Activated T-helper 2 cell treated with anti-CD3 and anti-CD28 coated beads, Interferon-gamma antibody, Interleukin-2, Interleukin-4, amounts not matched to agents 10 μg/mL and 5 μg/mL and 100 μg/mL, durations not matched to agents 14 hours and 24 hours and 36 hours (primary cell): ENCODE measurements at regions of chr11 and their contacts with region 1.

Region 1: DNA sequence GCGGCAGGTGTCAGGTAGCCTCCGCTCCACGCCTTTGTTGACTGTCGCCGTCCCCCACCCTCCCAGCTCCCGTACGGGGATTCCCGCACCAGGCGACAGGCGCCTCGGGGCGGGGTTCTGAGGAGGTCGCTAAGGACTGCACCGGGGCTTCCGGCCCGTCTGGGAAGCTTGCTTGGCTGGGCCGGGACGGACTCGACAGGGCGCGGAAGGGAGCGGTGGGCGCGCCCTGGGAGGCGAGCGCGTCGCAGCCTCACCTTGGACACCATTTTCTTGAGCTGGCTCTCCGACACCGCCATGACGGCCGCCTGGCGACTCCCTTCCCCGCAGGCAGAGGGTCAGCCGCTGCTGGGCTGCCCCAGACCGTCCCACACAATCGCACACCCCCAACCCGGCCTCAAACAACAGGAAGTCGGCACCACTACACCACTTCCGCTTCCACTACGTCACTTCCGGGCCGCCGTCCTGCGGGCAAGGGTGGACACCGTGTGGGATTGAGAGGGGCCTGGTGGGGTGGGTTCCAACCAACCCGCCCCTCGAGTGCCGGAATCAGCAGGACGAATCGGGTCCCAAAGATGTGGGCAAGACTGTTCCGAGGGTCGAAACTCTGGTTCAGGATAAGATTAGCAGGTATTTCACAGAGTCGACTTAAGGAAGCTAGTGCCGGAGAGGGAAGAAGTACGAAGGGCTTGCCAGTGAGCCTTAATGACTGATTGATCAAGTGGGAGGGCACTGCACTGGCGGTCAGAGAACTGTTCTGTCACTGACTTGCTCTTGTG is at the start of gene TSG101:
- DNase-seq: peak; percentile 90
- H3K4me3 Mint-ChIP-seq: peak within 1 kb of the TSS; percentile 97
- H3K27ac Mint-ChIP-seq: peak within 1 kb of the TSS; percentile 98
- H3K4me1 Mint-ChIP-seq: peaks cover 30% of the 10 kb centered on the region
- H3K27me3 Mint-ChIP-seq: no peaks in the 10 kb centered on the region
- total RNA-seq, gene TSG101: 49.5 and 53.3 TPM in 2 replicates

Region 2: DNA sequence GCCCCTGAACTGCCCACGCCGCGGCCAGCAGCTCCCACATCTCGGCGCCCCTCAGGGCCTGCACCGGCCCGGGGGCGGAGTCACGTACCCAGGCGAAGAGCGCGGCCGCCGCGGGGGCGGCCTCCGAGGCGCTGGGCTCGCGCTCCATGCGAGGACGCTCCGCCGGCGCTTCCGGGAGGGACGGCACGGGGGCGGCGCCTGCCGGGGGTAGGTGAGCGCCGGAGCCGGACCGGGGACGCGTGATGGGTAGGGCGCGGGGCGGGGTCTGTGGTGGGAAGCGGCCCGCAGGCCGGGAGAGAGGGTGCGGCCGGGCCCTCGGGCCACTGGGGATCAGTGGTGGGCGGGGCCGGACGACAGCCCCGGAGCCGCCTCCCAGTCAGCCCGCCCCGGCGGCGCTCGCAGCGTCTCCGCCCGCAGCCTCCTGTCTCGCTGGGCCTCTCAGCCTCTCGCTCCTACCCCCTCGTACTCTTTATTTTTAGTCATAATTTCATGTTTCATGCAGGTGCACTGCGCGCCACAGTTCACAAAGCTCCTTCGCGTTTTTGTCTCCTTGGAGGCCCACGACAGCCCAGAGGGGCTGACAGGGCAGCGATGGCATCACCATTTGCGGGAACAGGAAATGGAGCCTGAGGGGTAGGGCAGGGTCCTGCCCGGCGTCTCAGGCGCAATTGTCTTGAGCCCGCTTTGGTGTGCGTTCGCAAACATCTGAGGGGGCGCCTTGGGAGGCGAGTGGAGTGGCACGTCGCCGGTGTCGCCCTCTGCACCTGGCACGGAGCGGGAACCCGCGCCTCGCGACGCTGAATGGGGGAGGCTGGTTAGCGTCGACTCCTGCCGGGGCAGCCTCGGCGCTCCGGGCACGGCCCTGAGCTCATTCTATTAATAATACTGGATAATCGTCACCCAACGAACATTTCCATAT is 513.6 kb before region 1 on chr11 and contains the start of gene SERGEF:
- intact Hi-C with region 1: loop called (anchors 10 kb)
- DNase-seq: peak; percentile 93
- H3K4me3 Mint-ChIP-seq: peak within 1 kb of the TSS; percentile 99
- H3K27ac Mint-ChIP-seq: peak within 1 kb of the TSS; percentile 91
- H3K4me1 Mint-ChIP-seq: peaks cover 33% of the 10 kb centered on the region
- H3K27me3 Mint-ChIP-seq: no peaks in the 10 kb centered on the region
- total RNA-seq, gene SERGEF: 39.5 and 43.9 TPM in 2 replicates

Region 3: DNA sequence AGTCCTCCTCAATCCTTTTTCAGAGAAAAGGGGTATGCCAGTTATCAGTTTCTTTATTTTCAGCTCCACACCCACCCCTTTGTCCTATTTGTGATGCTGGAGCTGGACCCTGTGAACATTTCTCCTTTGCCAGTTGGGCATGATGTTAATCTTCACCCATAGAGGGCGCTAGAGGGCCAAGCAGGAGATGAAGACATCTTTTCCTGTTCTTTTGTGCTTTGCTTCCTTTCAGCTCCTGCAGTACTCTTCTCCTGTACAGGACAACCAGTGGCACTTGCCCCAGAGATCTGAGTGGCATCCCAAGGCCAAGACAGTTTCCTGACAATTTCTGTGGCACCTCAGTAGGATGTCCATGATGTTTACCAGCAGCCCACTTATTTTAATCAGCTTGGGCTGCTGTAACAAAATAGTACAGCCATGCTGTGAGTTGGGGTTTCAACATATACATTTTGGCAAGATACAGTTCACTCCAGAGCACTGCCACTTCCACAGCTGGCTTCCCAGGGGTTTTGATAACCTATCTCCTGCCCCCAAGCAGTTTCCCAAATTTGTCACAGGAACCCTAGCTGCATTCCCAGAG is 282.8 kb before region 1 on chr11:
- intact Hi-C with region 1: loop called (anchors 5 kb)
- DNase-seq: peak; percentile 63
- H3K4me3 Mint-ChIP-seq: no peak overlapping the region
- H3K27ac Mint-ChIP-seq: peak overlapping the region; percentile 54
- H3K4me1 Mint-ChIP-seq: peaks cover 25% of the 10 kb centered on the region
- H3K27me3 Mint-ChIP-seq: peaks cover 34% of the 10 kb centered on the region

Region 4: DNA sequence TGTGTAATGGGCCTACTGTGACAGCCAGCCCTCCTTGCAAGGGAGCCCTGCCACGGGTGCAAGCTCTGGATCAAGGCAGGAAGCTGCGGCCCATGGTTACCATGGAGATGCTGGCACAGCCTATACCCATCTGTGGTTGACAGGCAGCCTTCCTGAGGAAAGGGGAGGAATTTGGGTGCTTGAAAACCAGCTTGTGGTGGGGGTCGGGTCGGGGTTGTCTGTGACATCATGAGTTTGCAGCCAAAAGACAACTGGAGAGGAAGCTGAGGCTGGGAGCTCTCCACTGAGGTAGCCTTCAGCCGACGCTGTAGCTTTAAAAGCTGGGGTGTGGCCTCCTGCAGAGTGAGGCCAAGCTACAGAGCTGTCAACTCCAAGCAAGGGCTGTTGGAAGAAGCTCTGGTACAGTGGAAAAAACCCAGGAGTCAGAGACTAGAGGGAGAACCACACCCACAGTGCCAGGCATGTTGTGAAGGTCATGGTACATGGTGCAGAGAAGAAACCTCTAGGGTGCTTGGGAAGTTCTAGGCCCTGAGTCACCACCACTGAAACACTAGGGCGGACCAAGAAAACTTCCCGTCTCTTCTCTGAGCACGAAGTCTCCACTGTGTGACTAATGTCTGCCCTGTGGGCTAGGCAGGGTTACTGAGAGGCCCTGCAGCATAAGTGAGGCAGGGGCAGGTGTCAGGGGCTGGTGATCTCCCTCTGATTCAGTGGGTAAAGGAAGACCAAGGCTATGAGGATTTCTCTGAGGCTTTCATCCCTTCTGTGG is 143.1 kb before region 1 on chr11:
- intact Hi-C with region 1: loop called (anchors 1 kb)
- DNase-seq: peak; percentile 63
- H3K4me3 Mint-ChIP-seq: peak overlapping the region; percentile 75
- H3K27ac Mint-ChIP-seq: peak overlapping the region; percentile 100
- H3K4me1 Mint-ChIP-seq: peaks cover 35% of the 10 kb centered on the region
- H3K27me3 Mint-ChIP-seq: no peaks in the 10 kb centered on the region

Region 5: DNA sequence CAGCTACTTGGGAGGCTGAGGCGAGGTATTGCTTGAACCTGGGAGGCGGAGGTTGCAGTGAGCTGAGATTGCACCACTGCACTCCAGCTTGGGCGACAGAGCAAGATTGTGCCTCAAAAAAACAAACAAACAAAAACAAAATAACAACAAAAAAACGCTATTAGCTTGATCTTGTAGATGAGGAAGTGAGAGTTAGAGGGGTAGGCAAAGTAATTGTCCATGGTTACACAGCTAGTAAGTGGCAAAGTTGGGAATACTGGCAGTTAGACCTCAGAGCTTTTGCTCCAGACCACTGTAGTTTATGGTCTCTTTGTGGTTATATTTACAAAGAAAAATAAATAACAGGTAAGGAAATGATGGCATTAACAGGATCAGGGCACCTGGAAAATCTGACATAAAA is 99.5 kb before region 1 on chr11:
- intact Hi-C with region 1: no loop called
- DNase-seq: no peak
- H3K4me3 Mint-ChIP-seq: no peak overlapping the region
- H3K27ac Mint-ChIP-seq: no peak overlapping the region
- H3K4me1 Mint-ChIP-seq: peaks cover 3% of the 10 kb centered on the region
- H3K27me3 Mint-ChIP-seq: no peaks in the 10 kb centered on the region

Region 6: GRCh38 chr11:18588297-18589252 is 61.9 kb after region 1 on chr11 and contains the start of gene UEVLD:
- intact Hi-C with region 1: loop called (anchors 1 kb)
- DNase-seq: peak; percentile 62
- H3K4me3 Mint-ChIP-seq: no peak within 1 kb of the TSS
- H3K27ac Mint-ChIP-seq: no peak within 1 kb of the TSS
- H3K4me1 Mint-ChIP-seq: peaks cover 9% of the 10 kb centered on the region
- H3K27me3 Mint-ChIP-seq: no peaks in the 10 kb centered on the region
- total RNA-seq, gene UEVLD: 26.4 and 32.7 TPM in 2 replicates

Region 7: GRCh38 chr11:18634140-18635032 is 107.7 kb after region 1 on chr11 and contains the start of gene SPTY2D1:
- intact Hi-C with region 1: loop called (anchors 1 kb)
- DNase-seq: peak; percentile 98
- H3K4me3 Mint-ChIP-seq: peak within 1 kb of the TSS; percentile 97
- H3K27ac Mint-ChIP-seq: peak within 1 kb of the TSS; percentile 93
- H3K4me1 Mint-ChIP-seq: peaks cover 22% of the 10 kb centered on the region
- H3K27me3 Mint-ChIP-seq: peaks cover 3% of the 10 kb centered on the region
- total RNA-seq, gene SPTY2D1: 26.5 and 29.0 TPM in 2 replicates

Region 8: DNA sequence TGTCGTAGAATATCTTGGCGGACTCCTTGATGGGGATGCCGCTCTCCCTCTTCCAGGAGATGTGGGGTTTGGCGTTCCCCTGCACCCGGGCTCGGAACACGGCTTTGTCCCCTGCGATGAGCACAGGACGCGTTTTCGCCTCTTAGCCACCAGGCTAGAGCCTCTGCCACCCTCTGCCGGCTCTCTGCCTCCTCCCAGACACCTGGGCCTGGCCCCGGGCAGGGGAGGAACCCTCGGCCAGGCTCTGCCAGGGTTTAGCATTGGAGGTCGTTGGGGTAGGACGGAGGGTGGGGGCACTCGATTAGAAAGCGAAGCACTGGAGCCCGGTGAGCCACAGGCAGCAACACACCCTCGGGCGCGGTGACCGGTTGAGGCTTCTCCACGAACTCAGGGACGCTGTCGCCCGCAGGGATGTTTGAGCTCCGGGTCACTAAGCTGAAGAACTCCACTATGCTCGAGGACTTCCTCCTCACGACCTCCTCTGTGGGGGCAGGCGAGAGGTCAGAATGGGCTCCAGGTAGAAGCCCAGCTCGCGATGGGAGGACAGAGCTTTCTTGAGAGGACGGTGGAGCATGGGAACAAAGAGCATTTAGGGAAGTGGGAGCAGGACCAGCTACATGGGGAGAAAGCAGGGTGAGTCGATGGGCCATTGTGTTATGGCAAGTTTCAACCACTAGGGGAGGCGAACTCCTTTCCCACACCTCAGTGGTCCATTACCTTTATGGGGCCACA is 195.0 kb after region 1 on chr11:
- intact Hi-C with region 1: loop called (anchors 5 kb)
- DNase-seq: peak; percentile 32
- H3K4me3 Mint-ChIP-seq: peak overlapping the region; percentile 84
- H3K27ac Mint-ChIP-seq: no peak overlapping the region
- H3K4me1 Mint-ChIP-seq: peaks cover 7% of the 10 kb centered on the region
- H3K27me3 Mint-ChIP-seq: peaks cover 15% of the 10 kb centered on the region

Region 9: GRCh38 chr11:18836417-18836816 is 309.7 kb after region 1 on chr11:
- intact Hi-C with region 1: no loop called
- DNase-seq: no peak
- H3K4me3 Mint-ChIP-seq: no peak overlapping the region
- H3K27ac Mint-ChIP-seq: no peak overlapping the region
- H3K4me1 Mint-ChIP-seq: no peaks in the 10 kb centered on the region
- H3K27me3 Mint-ChIP-seq: peaks cover 7% of the 10 kb centered on the region

Region 10: GRCh38 chr11:18972336-18972735 is 445.6 kb after region 1 on chr11:
- intact Hi-C with region 1: no loop called
- DNase-seq: no peak
- H3K4me3 Mint-ChIP-seq: no peak overlapping the region
- H3K27ac Mint-ChIP-seq: no peak overlapping the region
- H3K4me1 Mint-ChIP-seq: no peaks in the 10 kb centered on the region
- H3K27me3 Mint-ChIP-seq: peaks cover 3% of the 10 kb centered on the region